PC-3 (cell line): ENCODE measurements at regions of chr2 and their contacts with region 1.

Region 1: GRCh38 chr2:41657226-41657625 is 390.6 kb upstream of the PKDCC start:
- DNase-seq: no peak
- ATAC-seq: no peak
- H3K4me3 ChIP-seq: no peak overlapping the region
- H3K27ac ChIP-seq: no peak overlapping the region
- H3K4me1 ChIP-seq: no peaks in the 10 kb centered on the region
- H3K27me3 ChIP-seq: peaks cover 16% of the 10 kb centered on the region
- CTCF ChIP-seq: no peak

Region 2: GRCh38 chr2:40304340-40304739 is 1352.9 kb before region 1 on chr2:
- CTCF ChIA-PET with region 1: no interaction called
- POLR2A ChIA-PET with region 1: interaction called, 15 read pairs
- intact Hi-C with region 1: no loop called
- DNase-seq: no peak
- ATAC-seq: no peak
- H3K4me3 ChIP-seq: no peak overlapping the region
- H3K27ac ChIP-seq: no peak overlapping the region
- H3K4me1 ChIP-seq: no peaks in the 10 kb centered on the region
- H3K27me3 ChIP-seq: no peaks in the 10 kb centered on the region
- CTCF ChIP-seq: no peak

Region 3: GRCh38 chr2:41698678-41699422 is 41.6 kb after region 1 on chr2:
- CTCF ChIA-PET with region 1: no interaction called
- POLR2A ChIA-PET with region 1: no interaction called
- intact Hi-C with region 1: no loop called
- DNase-seq: peak; percentile 20
- ATAC-seq: peak; percentile 61
- H3K4me3 ChIP-seq: no peak overlapping the region
- H3K27ac ChIP-seq: no peak overlapping the region
- H3K4me1 ChIP-seq: no peaks in the 10 kb centered on the region
- H3K27me3 ChIP-seq: peaks cover 26% of the 10 kb centered on the region; the same call in 1 of the 2 replicates
- CTCF ChIP-seq: peak; percentile 91

Region 4: DNA sequence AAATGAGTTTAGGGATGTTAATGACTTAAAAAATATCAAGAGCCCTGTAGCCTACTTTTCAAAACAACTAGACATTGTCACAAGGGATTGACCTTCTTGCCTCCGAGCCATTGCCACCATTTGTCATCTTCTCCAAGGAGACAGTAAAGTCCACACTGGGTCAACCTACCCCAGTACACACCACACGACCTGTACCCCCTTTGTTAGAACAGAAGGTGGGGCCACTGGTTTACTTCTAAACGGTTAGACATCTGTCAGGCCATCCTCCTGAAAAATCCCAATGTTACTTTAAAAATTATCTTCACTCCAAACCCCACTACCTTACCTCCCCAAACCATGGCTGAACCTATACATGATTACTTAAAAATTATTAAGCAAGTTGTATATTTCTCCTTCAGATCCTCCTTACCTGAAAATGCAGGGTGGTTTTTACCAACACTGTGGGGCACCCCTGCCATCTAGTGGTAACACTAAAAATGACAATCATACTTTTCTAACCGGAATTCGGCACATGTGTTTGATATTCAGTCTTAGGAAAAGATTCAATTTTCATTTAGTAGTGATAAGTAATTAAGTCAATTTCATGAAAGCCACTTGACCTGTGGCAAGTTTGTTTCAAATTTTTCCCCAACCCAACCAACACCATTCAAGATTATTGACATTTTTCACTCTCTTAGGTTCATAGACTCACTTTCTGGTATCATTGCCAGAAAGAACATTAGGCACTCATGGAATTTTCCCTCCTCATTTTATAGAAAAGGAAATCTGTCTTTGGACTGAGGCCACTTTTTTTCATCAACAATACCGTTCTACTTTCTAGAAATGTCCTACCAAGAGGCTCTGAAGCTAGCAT is 125.3 kb after region 1 on chr2:
- CTCF ChIA-PET with region 1: no interaction called
- POLR2A ChIA-PET with region 1: no interaction called
- intact Hi-C with region 1: no loop called
- DNase-seq: peak; percentile 69
- ATAC-seq: peak; percentile 33; the same call in 1 of the 2 replicates
- H3K4me3 ChIP-seq: no peak overlapping the region
- H3K27ac ChIP-seq: no peak overlapping the region
- H3K4me1 ChIP-seq: no peaks in the 10 kb centered on the region
- H3K27me3 ChIP-seq: peaks cover 30% of the 10 kb centered on the region; the same call in 1 of the 2 replicates
- CTCF ChIP-seq: peak; percentile 92